Activated CD8-positive, alpha-beta T cell treated with anti-CD3 and anti-CD28 coated beads for 36 hours (primary cell): ENCODE measurements at regions of chr10 and their contacts with region 1.

Region 1: GRCh38 chr10:130127364-130128061 is 8.7 kb upstream of the GLRX3 start:
- DNase-seq: peak; percentile 71
- ATAC-seq: peak; percentile 94
- H3K4me3 Mint-ChIP-seq: no peak overlapping the region
- H3K27ac Mint-ChIP-seq: no peak overlapping the region
- H3K4me1 Mint-ChIP-seq: peaks cover 7% of the 10 kb centered on the region
- H3K27me3 Mint-ChIP-seq: peaks cover 24% of the 10 kb centered on the region
- CTCF ChIP-seq: peak; percentile 76

Region 2: DNA sequence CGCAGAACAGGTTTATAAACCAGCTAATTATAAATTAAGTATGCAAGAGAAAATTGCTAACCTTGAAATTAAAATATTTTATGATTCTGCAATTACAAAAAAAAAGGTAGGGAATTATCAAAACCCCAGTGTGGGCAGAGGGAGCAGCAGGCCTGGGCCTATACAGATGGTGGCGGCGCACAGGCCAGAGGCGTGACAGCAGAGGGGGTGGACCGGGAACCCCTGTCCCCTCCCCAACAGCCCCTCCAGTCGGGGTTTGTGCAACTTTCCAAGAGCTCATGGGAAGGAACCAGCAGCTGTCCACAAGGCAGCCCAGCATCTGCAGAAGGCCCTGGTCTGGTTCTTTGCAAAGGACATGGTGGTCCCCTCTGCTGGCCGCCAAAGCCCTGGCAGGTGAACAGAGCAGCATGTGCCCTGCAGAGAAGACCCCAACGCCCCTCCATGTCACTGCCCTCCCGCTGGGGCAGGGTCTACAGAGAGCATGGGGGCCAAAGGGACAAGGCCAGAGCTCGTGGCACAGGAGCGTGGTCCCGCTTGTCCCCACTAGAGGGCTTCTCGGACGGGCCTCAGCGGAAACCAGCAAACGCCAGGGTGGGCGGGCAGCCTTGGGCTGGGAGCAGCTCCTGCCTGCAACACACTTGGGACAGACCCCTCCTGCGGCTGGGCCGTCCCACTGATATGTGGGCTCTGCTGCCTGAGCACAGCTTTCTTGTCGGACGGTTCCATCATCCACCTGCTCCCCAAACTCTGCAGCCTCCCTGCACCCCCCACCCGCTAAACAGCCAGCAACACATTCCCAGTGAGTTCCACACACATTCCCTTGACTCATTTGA is 238.5 kb before region 1 on chr10:
- CTCF ChIA-PET with region 1: interaction called, 9 read pairs
- POLR2A ChIA-PET with region 1: no interaction called
- intact Hi-C with region 1: loop called (anchors 10 kb)
- DNase-seq: peak; percentile 65
- ATAC-seq: peak; percentile 72
- H3K4me3 Mint-ChIP-seq: no peak overlapping the region
- H3K27ac Mint-ChIP-seq: no peak overlapping the region
- H3K4me1 Mint-ChIP-seq: no peaks in the 10 kb centered on the region
- H3K27me3 Mint-ChIP-seq: no peaks in the 10 kb centered on the region
- CTCF ChIP-seq: peak; percentile 48

Region 3: GRCh38 chr10:129971381-129972144 is 155.9 kb before region 1 on chr10:
- CTCF ChIA-PET with region 1: interaction called, 17 read pairs
- POLR2A ChIA-PET with region 1: no interaction called
- intact Hi-C with region 1: loop called (anchors 5 kb)
- DNase-seq: peak; percentile 64
- ATAC-seq: peak; percentile 91
- H3K4me3 Mint-ChIP-seq: no peak overlapping the region
- H3K27ac Mint-ChIP-seq: no peak overlapping the region
- H3K4me1 Mint-ChIP-seq: peaks cover 11% of the 10 kb centered on the region
- H3K27me3 Mint-ChIP-seq: peaks cover 62% of the 10 kb centered on the region
- CTCF ChIP-seq: peak; percentile 58

Region 4: GRCh38 chr10:130110246-130111112 is 17.0 kb before region 1 on chr10 and contains the start of gene C10orf143:
- CTCF ChIA-PET with region 1: interaction called, 44 read pairs
- POLR2A ChIA-PET with region 1: interaction called, 25 read pairs
- intact Hi-C with region 1: no loop called
- DNase-seq: peak; percentile 97
- ATAC-seq: peak; percentile 84
- H3K4me3 Mint-ChIP-seq: peak within 1 kb of the TSS; percentile 92
- H3K27ac Mint-ChIP-seq: peak within 1 kb of the TSS; percentile 97
- H3K4me1 Mint-ChIP-seq: peaks cover 43% of the 10 kb centered on the region
- H3K27me3 Mint-ChIP-seq: no peaks in the 10 kb centered on the region
- CTCF ChIP-seq: no peak
- total RNA-seq, gene C10orf143: 4.4 to 5.1 TPM